Naive thymus-derived CD4-positive, alpha-beta T cell (primary cell): ENCODE measurements at regions of chrX and their contacts with region 1.

Region 1: DNA sequence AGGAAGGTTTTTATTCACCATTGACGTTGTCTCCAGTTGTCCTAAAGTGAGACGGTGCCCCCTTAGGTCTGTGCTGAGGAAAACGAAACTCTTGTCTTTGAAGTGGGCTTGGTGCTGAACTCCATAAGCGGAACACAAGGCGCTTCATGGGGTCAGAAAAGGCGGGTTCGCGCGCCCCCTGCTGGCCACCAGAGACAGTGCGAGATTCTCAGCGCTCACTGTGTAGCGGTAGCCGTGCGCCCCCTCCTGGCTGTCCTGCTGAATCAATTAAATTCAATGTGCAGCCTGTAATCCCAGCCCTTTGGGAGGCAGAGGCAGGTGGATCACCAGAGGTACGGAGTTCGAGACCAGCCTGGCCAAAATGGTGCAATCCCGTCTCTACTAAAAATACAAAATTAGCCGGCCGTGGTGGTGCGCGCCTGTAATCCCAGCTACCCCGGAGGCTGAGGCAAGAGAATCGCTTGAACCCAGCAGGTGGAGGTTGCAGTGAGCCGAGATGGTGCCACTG is 64.1 kb downstream of the RLIM start:
- DNase-seq: peak; percentile 66 to 86 (median 80)
- ATAC-seq: peak; percentile 100
- H3K4me3 ChIP-seq: peak overlapping the region; percentile 21
- H3K4me3 Mint-ChIP-seq: peak overlapping the region; percentile 21 to 79 (median 76)
- H3K27ac ChIP-seq: no peak overlapping the region
- H3K27ac Mint-ChIP-seq: peak overlapping the region in 7 of 9 donors; percentile 9 to 59 (median 47)
- H3K4me1 ChIP-seq: no peaks in the 10 kb centered on the region
- H3K4me1 Mint-ChIP-seq: peaks cover 0 to 5% (median 3%) of the 10 kb centered on the region in 7 donors
- H3K27me3 ChIP-seq: no peaks in the 10 kb centered on the region
- H3K27me3 Mint-ChIP-seq: no peaks in the 10 kb centered on the region

Region 2: GRCh38 chrX:73390628-73391567 is 1159.5 kb before region 1 on chrX:
- CTCF ChIA-PET with region 1: no interaction called
- POLR2A ChIA-PET with region 1: no interaction called
- intact Hi-C with region 1: no loop called
- DNase-seq: no peak
- ATAC-seq: no peak
- H3K4me3 ChIP-seq: no peak overlapping the region
- H3K4me3 Mint-ChIP-seq: no peak overlapping the region
- H3K27ac ChIP-seq: no peak overlapping the region
- H3K27ac Mint-ChIP-seq: peak overlapping the region in 1 of 9 donors; percentile 7
- H3K4me1 ChIP-seq: no peaks in the 10 kb centered on the region
- H3K4me1 Mint-ChIP-seq: no peaks in the 10 kb centered on the region
- H3K27me3 ChIP-seq: no peaks in the 10 kb centered on the region
- H3K27me3 Mint-ChIP-seq: no peaks in the 10 kb centered on the region

Region 3: GRCh38 chrX:73855546-73855945 is 694.8 kb before region 1 on chrX:
- CTCF ChIA-PET with region 1: no interaction called
- POLR2A ChIA-PET with region 1: no interaction called
- intact Hi-C with region 1: loop called in 1 of 2 experiments (anchors 2 kb)
- DNase-seq: peak; percentile 11 to 81 (median 59)
- ATAC-seq: peak; percentile 64
- H3K4me3 ChIP-seq: no peak overlapping the region
- H3K4me3 Mint-ChIP-seq: no peak overlapping the region
- H3K27ac ChIP-seq: no peak overlapping the region
- H3K27ac Mint-ChIP-seq: no peak overlapping the region
- H3K4me1 ChIP-seq: no peaks in the 10 kb centered on the region
- H3K4me1 Mint-ChIP-seq: peaks cover 0 to 4% (median 0%) of the 10 kb centered on the region in 7 donors
- H3K27me3 ChIP-seq: no peaks in the 10 kb centered on the region
- H3K27me3 Mint-ChIP-seq: no peaks in the 10 kb centered on the region

Region 4: GRCh38 chrX:74343343-74344279 is 206.7 kb before region 1 on chrX:
- CTCF ChIA-PET with region 1: no interaction called
- POLR2A ChIA-PET with region 1: no interaction called
- intact Hi-C with region 1: loop called in 1 of 2 experiments (anchors 1 kb)
- DNase-seq: peak in 8 of 9 donors; percentile 17 to 59 (median 44)
- ATAC-seq: peak; percentile 82
- H3K4me3 ChIP-seq: no peak overlapping the region
- H3K4me3 Mint-ChIP-seq: no peak overlapping the region
- H3K27ac ChIP-seq: no peak overlapping the region
- H3K27ac Mint-ChIP-seq: peak overlapping the region in 1 of 9 donors; percentile 37
- H3K4me1 ChIP-seq: no peaks in the 10 kb centered on the region
- H3K4me1 Mint-ChIP-seq: peaks cover 0 to 5% (median 3%) of the 10 kb centered on the region in 7 donors
- H3K27me3 ChIP-seq: no peaks in the 10 kb centered on the region
- H3K27me3 Mint-ChIP-seq: peaks cover 0 to 4% (median 4%) of the 10 kb centered on the region in 5 donors

Region 5: DNA sequence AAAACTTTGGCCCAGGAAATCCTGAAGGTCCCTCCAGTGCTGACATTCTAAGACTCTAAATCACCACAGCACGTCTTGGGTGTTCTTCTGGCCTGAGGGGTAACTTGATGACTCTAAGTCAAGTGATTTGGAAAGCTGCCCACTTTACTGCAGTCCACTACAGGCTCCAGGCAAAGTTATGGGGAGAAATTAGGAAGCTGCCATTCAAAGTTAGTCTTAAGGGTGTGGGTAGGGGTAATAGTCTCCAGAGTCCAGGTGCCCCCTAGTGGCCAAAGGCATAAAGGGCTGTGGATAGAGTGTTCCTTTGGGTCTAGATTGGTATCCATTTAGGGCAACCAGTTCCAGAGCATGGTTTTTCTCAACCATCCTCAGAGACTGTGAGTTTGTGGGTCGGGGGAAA is 167.7 kb before region 1 on chrX:
- CTCF ChIA-PET with region 1: no interaction called
- POLR2A ChIA-PET with region 1: no interaction called
- intact Hi-C with region 1: loop called (anchors 1 kb)
- DNase-seq: peak; percentile 11 to 50 (median 30)
- ATAC-seq: peak; percentile 82
- H3K4me3 ChIP-seq: no peak overlapping the region
- H3K4me3 Mint-ChIP-seq: no peak overlapping the region
- H3K27ac ChIP-seq: no peak overlapping the region
- H3K27ac Mint-ChIP-seq: no peak overlapping the region
- H3K4me1 ChIP-seq: no peaks in the 10 kb centered on the region
- H3K4me1 Mint-ChIP-seq: no peaks in the 10 kb centered on the region
- H3K27me3 ChIP-seq: no peaks in the 10 kb centered on the region
- H3K27me3 Mint-ChIP-seq: peaks cover 0 to 6% (median 5%) of the 10 kb centered on the region in 5 donors

Region 6: GRCh38 chrX:74492720-74493201 is 57.6 kb before region 1 on chrX:
- CTCF ChIA-PET with region 1: no interaction called
- POLR2A ChIA-PET with region 1: no interaction called
- intact Hi-C with region 1: loop called (anchors 1 to 2 kb)
- DNase-seq: peak in 2 of 9 donors; percentile 7 to 12
- ATAC-seq: no peak
- H3K4me3 ChIP-seq: no peak overlapping the region
- H3K4me3 Mint-ChIP-seq: no peak overlapping the region
- H3K27ac ChIP-seq: no peak overlapping the region
- H3K27ac Mint-ChIP-seq: no peak overlapping the region
- H3K4me1 ChIP-seq: no peaks in the 10 kb centered on the region
- H3K4me1 Mint-ChIP-seq: no peaks in the 10 kb centered on the region
- H3K27me3 ChIP-seq: no peaks in the 10 kb centered on the region
- H3K27me3 Mint-ChIP-seq: no peaks in the 10 kb centered on the region

Region 7: DNA sequence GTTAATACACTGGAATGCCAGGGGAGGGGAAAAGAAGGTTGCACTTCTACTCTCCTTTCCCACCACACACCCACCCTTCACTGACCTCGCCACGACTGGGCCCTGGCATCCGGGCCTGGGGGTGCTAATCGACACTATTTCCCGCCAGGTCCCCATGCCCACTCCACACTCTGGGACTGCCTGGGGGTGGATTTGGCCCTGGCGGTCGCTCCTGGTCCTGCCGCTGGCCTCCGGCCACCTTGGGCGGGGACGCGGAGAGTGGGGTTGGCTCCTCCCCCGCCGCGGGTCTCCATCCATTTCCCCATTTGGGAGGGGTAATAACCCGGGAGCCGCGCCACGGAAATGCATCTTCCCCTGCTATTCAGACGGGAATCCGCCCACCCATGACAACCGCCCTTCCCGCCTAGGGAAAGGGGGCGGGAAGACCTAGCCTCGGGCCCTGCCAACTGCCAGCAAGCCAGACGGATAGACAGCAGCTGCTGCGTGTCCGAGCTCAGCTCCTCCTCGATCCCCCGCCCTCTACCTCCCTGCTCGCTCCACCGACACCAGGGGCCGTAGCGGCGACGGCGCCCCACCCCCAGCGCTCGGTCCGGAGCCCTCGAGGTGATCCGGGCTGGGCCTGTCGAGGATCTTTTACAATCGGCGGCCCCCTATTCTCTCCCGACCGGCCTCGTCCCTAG is 14.1 kb before region 1 on chrX:
- CTCF ChIA-PET with region 1: no interaction called
- POLR2A ChIA-PET with region 1: no interaction called
- intact Hi-C with region 1: loop called (anchors 2 kb)
- DNase-seq: peak in 6 of 9 donors; percentile 6 to 35 (median 12)
- ATAC-seq: peak; percentile 73
- H3K4me3 ChIP-seq: peak overlapping the region; percentile 63
- H3K4me3 Mint-ChIP-seq: peak overlapping the region; percentile 75 to 89 (median 85)
- H3K27ac ChIP-seq: peak overlapping the region; percentile 54
- H3K27ac Mint-ChIP-seq: peak overlapping the region in 8 of 9 donors; percentile 51 to 80 (median 68)
- H3K4me1 ChIP-seq: peaks cover 0 to 3% of the 10 kb centered on the region in 2 donors
- H3K4me1 Mint-ChIP-seq: peaks cover 0 to 18% (median 7%) of the 10 kb centered on the region in 7 donors
- H3K27me3 ChIP-seq: no peaks in the 10 kb centered on the region
- H3K27me3 Mint-ChIP-seq: no peaks in the 10 kb centered on the region

Region 8: GRCh38 chrX:75156021-75156945 is 605.9 kb after region 1 on chrX and contains the start of gene ABCB7:
- CTCF ChIA-PET with region 1: no interaction called
- POLR2A ChIA-PET with region 1: no interaction called
- intact Hi-C with region 1: no loop called
- DNase-seq: peak; percentile 24 to 68 (median 59)
- ATAC-seq: peak; percentile 95
- H3K4me3 ChIP-seq: peak within 1 kb of the TSS; percentile 86
- H3K4me3 Mint-ChIP-seq: peak within 1 kb of the TSS; percentile 87 to 100 (median 95)
- H3K27ac ChIP-seq: peak within 1 kb of the TSS; percentile 75
- H3K27ac Mint-ChIP-seq: peak within 1 kb of the TSS; percentile 92 to 100 (median 96)
- H3K4me1 ChIP-seq: no peaks in the 10 kb centered on the region
- H3K4me1 Mint-ChIP-seq: peaks cover 10 to 63% (median 41%) of the 10 kb centered on the region in 7 donors
- H3K27me3 ChIP-seq: no peaks in the 10 kb centered on the region
- H3K27me3 Mint-ChIP-seq: no peaks in the 10 kb centered on the region
- total RNA-seq, gene ABCB7: 19.4 to 33.0 (median 26.3) TPM